ENCODE measurements at regions of chr2 and their contacts with region 1.

Region 1: GRCh38 chr2:201860636-201861066 is 54.3 kb downstream of the CDK15 start:
- DNase-seq: peak; percentile 9 to 30
- ATAC-seq: peak; percentile 89 to 91
- H3K4me3 ChIP-seq: no peak overlapping the region
- H3K27ac ChIP-seq: no peak overlapping the region
- H3K4me1 ChIP-seq: peaks cover 0 to 5% of the 10 kb centered on the region in 2 donors
- H3K27me3 ChIP-seq: no peaks in the 10 kb centered on the region
- CTCF ChIP-seq: peak; percentile 54 to 87 (median 84)
- POLR2A ChIP-seq: no peak

Region 2: DNA sequence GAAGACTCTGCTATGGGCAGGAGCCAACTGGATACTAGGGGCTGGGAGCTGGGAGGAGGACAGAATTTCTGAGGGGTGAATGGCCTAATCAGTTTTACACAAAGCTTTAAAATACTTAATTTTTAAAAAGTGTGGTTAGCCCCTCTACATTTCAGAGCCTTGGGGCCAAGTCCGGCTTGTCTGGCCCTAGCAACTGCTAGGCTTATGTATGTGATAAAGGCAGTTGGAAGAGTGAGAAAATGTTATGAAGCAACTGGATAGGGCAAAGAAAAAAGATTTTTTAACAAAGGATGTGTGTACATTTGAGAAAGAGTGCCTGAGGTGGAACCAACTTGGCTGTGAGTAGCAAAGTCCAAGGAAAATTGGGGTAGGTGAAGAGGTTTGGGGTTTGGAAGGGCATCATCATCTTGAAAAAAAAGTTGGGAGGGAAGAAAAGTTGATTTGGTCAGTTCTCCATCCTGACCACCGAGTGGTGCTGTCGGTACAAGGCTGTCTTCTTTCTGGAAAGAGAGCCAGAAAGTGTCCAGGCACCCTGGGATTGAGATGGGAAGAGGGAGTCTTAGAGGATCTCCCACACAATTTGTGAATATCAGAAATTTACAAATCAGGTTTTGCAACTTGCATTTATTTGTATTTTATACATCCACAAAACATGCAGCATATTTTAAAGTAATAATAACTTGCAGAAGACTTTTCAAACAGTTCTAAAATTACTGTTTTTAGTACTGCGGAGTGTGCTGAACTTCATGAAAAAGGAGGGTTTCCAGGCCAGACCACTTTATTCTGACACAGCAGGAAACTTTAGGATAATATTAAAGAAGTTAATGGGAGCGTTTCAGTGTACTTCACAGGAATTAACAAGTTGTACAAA is 64.8 kb before region 1 on chr2:
- in situ Hi-C with region 1: no loop called
- intact Hi-C with region 1: loop called (anchors 1 kb)
- DNase-seq: no peak
- ATAC-seq: peak; percentile 66 to 72
- H3K4me3 ChIP-seq: no peak overlapping the region
- H3K27ac ChIP-seq: no peak overlapping the region
- H3K4me1 ChIP-seq: no peaks in the 10 kb centered on the region
- H3K27me3 ChIP-seq: no peaks in the 10 kb centered on the region
- CTCF ChIP-seq: peak; percentile 40 to 70 (median 52)
- POLR2A ChIP-seq: no peak

Region 3: GRCh38 chr2:201909961-201910361 is 49.3 kb after region 1 on chr2:
- in situ Hi-C with region 1: no loop called
- intact Hi-C with region 1: no loop called
- DNase-seq: no peak
- ATAC-seq: no peak
- H3K4me3 ChIP-seq: no peak overlapping the region
- H3K27ac ChIP-seq: no peak overlapping the region
- H3K4me1 ChIP-seq: no peaks in the 10 kb centered on the region
- H3K27me3 ChIP-seq: no peaks in the 10 kb centered on the region
- CTCF ChIP-seq: no peak
- POLR2A ChIP-seq: no peak

Region 4: DNA sequence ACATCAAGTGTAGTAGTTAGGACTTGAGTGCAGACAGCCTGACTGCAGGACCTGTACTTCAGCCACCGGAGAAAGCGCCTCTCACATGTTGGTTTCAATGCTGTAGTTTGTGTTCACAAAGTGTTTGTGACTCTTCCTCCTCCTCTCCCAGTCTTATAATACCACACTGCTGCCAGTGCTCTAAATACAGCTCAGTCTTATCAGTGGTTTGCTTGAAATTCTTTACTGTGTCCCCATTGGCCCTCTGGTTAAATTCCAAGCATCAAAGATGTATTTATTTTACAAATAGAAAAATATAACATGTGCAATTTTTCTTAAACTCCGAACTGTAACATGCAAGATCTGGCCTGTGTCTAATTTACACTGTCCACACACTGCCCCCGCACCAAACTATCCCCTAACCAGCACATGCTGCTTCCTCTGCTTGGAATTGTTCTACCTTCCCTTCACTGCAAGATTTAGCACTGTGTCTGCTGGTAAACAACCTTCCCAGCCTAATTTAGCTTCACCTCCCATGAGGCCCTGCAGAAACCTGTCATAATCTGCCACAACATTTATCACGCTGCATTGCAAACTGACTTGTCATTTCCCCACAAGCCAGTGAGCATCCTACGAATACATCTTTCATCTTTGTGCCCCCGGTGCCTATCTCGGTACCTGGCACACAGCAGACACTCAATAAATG is 300.6 kb after region 1 on chr2:
- in situ Hi-C with region 1: loop called in 1 of 4 experiments (anchors 10 kb)
- intact Hi-C with region 1: no loop called
- DNase-seq: no peak
- ATAC-seq: peak in 1 of 2 donors; percentile 65
- H3K4me3 ChIP-seq: no peak overlapping the region
- H3K27ac ChIP-seq: peak overlapping the region in 1 of 4 donors; percentile 22
- H3K4me1 ChIP-seq: peaks cover 4 to 10% of the 10 kb centered on the region in 2 donors
- H3K27me3 ChIP-seq: no peaks in the 10 kb centered on the region
- CTCF ChIP-seq: no peak
- POLR2A ChIP-seq: no peak

Region 5: GRCh38 chr2:202178342-202178958 is 317.8 kb after region 1 on chr2:
- in situ Hi-C with region 1: loop called in 3 of 4 experiments (anchors 5 kb)
- intact Hi-C with region 1: loop called (anchors 1 kb)
- DNase-seq: peak; percentile 22 to 38
- ATAC-seq: peak; percentile 90 to 96
- H3K4me3 ChIP-seq: no peak overlapping the region
- H3K27ac ChIP-seq: no peak overlapping the region
- H3K4me1 ChIP-seq: no peaks in the 10 kb centered on the region
- H3K27me3 ChIP-seq: no peaks in the 10 kb centered on the region
- CTCF ChIP-seq: peak; percentile 75 to 88 (median 79)
- POLR2A ChIP-seq: no peak

Region 6: DNA sequence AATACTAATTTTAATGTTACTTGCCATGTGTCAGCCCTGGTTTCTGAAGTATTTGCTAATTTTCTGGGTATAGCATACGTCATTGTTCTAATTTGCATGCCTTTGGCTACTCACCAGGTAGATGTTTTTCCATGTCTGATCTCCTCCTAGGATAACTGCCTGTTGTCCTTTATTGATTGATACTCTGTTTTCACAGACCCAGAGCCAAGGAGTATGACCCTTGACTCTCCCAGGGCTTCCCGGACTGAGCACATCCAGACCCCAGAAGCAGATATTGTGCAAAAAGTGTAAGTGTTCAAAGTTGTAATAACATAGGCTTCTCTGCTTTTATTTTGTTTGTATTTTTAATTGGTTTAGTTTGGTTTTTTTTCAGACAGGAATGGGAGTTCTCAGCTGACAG is 323.9 kb after region 1 on chr2:
- in situ Hi-C with region 1: loop called in 3 of 4 experiments (anchors 5 kb)
- intact Hi-C with region 1: no loop called
- DNase-seq: no peak
- ATAC-seq: no peak
- H3K4me3 ChIP-seq: no peak overlapping the region
- H3K27ac ChIP-seq: no peak overlapping the region
- H3K4me1 ChIP-seq: peaks cover 10% of the 10 kb centered on the region in 2 donors
- H3K27me3 ChIP-seq: no peaks in the 10 kb centered on the region
- CTCF ChIP-seq: no peak
- POLR2A ChIP-seq: no peak

Region 7: GRCh38 chr2:202261531-202261930 is 400.9 kb after region 1 on chr2:
- in situ Hi-C with region 1: no loop called
- intact Hi-C with region 1: no loop called
- DNase-seq: no peak
- ATAC-seq: no peak
- H3K4me3 ChIP-seq: no peak overlapping the region
- H3K27ac ChIP-seq: no peak overlapping the region
- H3K4me1 ChIP-seq: peaks cover 0 to under 1% of the 10 kb centered on the region in 2 donors
- H3K27me3 ChIP-seq: no peaks in the 10 kb centered on the region
- CTCF ChIP-seq: no peak
- POLR2A ChIP-seq: no peak

Measured in gastrocnemius medialis (tissue), 4 donors.